ENCODE measurements at regions of chr20 and their contacts with region 1.

Region 1: GRCh38 chr20:8389381-8390036 is 257.4 kb downstream of the PLCB1 start:
- DNase-seq: no peak
- H3K4me3 ChIP-seq: no peak overlapping the region
- H3K27ac ChIP-seq: no peak overlapping the region
- H3K4me1 ChIP-seq: peaks cover 11% of the 10 kb centered on the region
- H3K27me3 ChIP-seq: no peaks in the 10 kb centered on the region
- CTCF ChIP-seq: peak; percentile 16 to 54 (median 19)
- POLR2A ChIP-seq: no peak

Region 2: DNA sequence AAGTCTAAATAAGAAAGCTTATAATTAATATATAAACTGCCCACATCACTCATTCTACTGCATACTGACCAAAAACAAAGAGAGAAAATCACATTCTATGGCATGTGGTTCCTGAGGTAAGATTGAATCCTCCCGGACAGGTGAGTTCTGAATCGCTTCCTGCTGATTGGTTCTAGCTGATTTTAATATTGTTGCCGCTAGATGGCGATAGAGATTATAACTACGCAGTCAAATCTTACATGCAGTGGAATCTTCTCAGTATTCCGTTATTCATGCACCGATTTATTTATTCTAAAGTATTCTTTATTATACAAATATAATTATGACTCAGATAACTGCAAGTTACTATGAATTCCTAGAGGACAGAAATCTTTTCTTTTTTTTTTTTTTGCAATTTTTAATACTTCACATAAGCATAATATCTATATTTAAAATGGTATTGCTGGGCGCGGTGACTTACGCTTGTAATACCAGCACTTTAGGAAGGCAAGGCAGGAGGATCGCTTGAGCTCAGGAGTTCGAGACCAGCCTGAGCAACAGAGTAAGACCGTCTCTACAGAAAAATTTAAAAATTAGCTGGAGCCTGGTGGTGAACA is 345.7 kb before region 1 on chr20:
- intact Hi-C with region 1: loop called (anchors 10 kb)
- DNase-seq: no peak
- H3K4me3 ChIP-seq: no peak overlapping the region
- H3K27ac ChIP-seq: no peak overlapping the region
- H3K4me1 ChIP-seq: no peaks in the 10 kb centered on the region
- H3K27me3 ChIP-seq: no peaks in the 10 kb centered on the region
- CTCF ChIP-seq: peak; percentile 52 to 73 (median 57)
- POLR2A ChIP-seq: no peak

Region 3: GRCh38 chr20:8271727-8272126 is 117.8 kb before region 1 on chr20:
- intact Hi-C with region 1: no loop called
- DNase-seq: no peak
- H3K4me3 ChIP-seq: no peak overlapping the region
- H3K27ac ChIP-seq: no peak overlapping the region
- H3K4me1 ChIP-seq: no peaks in the 10 kb centered on the region
- H3K27me3 ChIP-seq: no peaks in the 10 kb centered on the region
- CTCF ChIP-seq: no peak
- POLR2A ChIP-seq: no peak

Region 4: DNA sequence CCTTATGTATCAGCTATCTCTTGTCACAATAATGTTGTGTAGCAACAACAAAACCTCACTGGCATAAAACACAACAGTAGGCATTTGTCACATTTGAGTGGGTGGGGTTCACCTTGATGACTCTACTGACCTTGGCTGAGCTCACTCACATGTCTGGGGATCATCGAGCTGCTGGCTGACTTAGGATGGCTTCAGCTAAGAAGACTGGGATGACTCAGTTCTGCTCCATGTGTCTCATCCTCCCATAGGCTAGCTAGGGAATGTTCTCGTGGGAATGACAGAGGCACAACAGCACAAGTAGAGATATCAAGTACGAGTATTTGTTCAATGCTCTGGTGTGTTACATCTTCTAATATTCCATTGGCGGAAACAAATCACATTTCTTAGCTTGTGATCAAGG is 89.6 kb before region 1 on chr20:
- intact Hi-C with region 1: no loop called
- DNase-seq: no peak
- H3K4me3 ChIP-seq: no peak overlapping the region
- H3K27ac ChIP-seq: no peak overlapping the region
- H3K4me1 ChIP-seq: no peaks in the 10 kb centered on the region
- H3K27me3 ChIP-seq: no peaks in the 10 kb centered on the region
- CTCF ChIP-seq: no peak
- POLR2A ChIP-seq: no peak

Region 5: DNA sequence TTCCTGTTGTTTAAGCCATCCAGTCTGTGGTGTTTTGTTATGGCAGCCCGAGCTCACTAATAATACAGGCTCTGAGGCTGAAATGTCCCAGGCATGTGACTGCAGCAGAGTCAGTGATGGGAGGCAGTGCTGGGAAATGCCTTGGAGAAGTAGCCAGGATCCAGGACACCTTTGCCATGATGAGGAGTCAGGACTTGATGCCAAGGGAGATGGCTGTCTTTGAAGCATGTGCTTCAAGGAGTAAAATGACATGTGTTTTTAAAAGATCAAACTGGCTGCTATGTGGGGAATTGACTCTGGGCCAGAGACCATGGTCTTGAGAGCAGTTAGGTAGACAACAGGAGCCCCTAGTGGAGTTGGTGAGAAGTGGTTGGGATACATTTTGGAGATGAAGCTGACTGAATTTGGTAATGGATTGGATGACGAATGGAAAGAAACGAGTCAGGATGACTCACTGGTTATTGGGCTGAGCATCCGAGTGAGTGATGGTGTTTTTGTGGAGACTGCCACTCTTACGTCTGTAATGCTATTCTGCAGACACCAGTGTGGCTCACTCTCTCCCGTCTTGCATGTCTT is 64.7 kb after region 1 on chr20:
- intact Hi-C with region 1: no loop called
- DNase-seq: no peak
- H3K4me3 ChIP-seq: no peak overlapping the region
- H3K27ac ChIP-seq: no peak overlapping the region
- H3K4me1 ChIP-seq: no peaks in the 10 kb centered on the region
- H3K27me3 ChIP-seq: no peaks in the 10 kb centered on the region
- CTCF ChIP-seq: no peak
- POLR2A ChIP-seq: no peak

Region 6: GRCh38 chr20:8602389-8603116 is 213.0 kb after region 1 on chr20:
- intact Hi-C with region 1: no loop called
- DNase-seq: no peak
- H3K4me3 ChIP-seq: no peak overlapping the region
- H3K27ac ChIP-seq: peak overlapping the region; percentile 4
- H3K4me1 ChIP-seq: peaks cover 21% of the 10 kb centered on the region
- H3K27me3 ChIP-seq: no peaks in the 10 kb centered on the region
- CTCF ChIP-seq: no peak
- POLR2A ChIP-seq: no peak